PC-9 (cell line): ENCODE measurements at regions of chr16 and their contacts with region 1.

Region 1: DNA sequence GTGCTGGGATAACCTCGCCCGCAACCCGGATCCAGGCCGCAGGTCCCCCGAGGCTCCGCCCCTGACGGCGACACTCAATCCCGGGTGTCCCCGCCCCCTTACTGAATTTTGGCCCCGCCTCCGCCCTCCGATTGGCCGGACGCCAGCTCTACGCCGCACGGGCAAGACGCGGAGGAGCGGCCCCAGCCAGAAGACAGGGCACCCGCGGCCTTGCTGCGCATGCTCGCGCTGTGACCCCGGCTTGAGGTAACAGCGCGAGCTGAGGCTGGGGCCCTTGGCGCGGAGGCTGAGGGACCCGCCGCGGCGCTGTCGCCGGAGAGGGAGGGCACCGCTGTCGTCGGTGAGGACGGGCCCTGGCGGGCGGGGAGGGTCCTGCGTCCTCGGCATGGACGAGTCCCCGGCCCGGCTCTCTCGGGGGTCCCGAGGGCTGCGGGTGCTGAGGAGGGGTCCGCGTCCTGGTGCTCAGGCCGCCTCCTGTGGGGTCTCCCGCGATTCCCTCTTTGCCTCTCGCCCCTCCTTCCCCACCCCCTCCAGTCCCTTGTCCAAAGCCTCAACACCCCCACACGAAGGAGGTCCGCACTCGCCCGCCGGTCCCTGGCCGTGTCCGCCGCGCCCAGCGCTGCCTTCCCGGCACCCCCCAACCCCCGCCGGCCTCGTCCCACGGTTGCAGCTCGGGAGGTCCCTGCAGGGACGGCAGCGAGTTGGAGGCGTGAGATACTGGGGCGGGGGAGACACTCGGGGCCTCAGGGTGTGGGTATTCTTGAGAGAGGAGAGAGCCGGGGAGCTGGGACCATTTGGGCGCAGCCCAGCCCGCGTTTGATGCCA is at the start of gene FLYWCH2:
- DNase-seq: peak; percentile 88 to 100
- H3K4me3 ChIP-seq: peak within 1 kb of the TSS; percentile 95
- H3K27ac ChIP-seq: no peak within 1 kb of the TSS
- H3K4me1 ChIP-seq: peaks cover 5% of the 10 kb centered on the region; the same call in 1 of the 2 replicates
- H3K27me3 ChIP-seq: no peaks in the 10 kb centered on the region
- CTCF ChIP-seq: no peak
- total RNA-seq, gene FLYWCH2: 41.5 and 50.1 TPM in 2 replicates

Region 2: DNA sequence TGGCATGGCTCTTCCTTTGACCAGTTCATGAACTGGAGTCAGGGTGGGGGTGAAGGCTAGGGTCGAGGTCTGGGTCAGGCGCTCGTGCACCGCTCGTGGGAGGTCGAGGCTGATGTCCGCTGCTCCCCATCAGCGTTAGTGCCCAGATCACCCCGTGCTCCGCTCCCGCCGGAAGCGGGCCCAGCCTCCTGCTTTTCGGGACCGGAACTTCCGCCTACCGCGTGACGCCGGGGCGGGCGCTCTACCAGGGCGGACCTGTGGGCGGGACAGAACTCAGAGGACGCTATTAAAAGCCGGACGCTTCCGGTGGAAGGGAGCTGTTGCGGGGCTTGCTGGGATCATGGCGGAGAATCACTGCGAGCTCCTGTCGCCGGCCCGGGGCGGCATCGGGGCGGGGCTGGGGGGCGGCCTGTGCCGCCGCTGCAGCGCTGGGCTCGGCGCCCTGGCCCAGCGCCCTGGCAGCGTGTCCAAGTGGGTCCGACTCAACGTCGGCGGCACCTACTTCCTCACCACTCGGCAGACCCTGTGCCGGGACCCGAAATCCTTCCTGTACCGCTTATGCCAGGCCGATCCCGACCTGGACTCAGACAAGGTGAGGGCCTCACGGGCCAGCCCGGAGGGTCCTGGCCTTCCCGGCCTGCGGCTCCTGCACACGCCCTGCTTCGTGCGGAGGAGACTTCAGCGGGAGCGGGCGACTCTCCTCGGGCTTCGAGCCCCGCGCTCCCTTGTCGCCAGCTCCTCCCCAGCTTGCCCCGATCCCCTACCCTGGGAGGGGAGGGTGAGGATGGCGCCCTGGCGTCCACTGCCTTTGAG is 200.8 kb before region 1 on chr16 and contains the start of gene KCTD5:
- CTCF ChIA-PET with region 1: no interaction called
- POLR2A ChIA-PET with region 1: interaction called, 12 read pairs
- intact Hi-C with region 1: no loop called
- DNase-seq: peak; percentile 95 to 100
- H3K4me3 ChIP-seq: peak within 1 kb of the TSS; percentile 81
- H3K27ac ChIP-seq: peak within 1 kb of the TSS; percentile 72
- H3K4me1 ChIP-seq: peaks cover 33% of the 10 kb centered on the region
- H3K27me3 ChIP-seq: no peaks in the 10 kb centered on the region
- CTCF ChIP-seq: no peak
- total RNA-seq, gene KCTD5: 60.4 and 66.5 TPM in 2 replicates

Region 3: GRCh38 chr16:2905431-2906387 is 22.5 kb after region 1 on chr16:
- CTCF ChIA-PET with region 1: interaction called, 4 read pairs
- POLR2A ChIA-PET with region 1: interaction called, 16 read pairs
- intact Hi-C with region 1: loop called (anchors 1 kb)
- DNase-seq: peak; percentile 95 to 100
- H3K4me3 ChIP-seq: peak overlapping the region; percentile 86; the same call in 1 of the 2 replicates
- H3K27ac ChIP-seq: no peak overlapping the region
- H3K4me1 ChIP-seq: peaks cover 24% of the 10 kb centered on the region
- H3K27me3 ChIP-seq: no peaks in the 10 kb centered on the region
- CTCF ChIP-seq: no peak

Region 4: DNA sequence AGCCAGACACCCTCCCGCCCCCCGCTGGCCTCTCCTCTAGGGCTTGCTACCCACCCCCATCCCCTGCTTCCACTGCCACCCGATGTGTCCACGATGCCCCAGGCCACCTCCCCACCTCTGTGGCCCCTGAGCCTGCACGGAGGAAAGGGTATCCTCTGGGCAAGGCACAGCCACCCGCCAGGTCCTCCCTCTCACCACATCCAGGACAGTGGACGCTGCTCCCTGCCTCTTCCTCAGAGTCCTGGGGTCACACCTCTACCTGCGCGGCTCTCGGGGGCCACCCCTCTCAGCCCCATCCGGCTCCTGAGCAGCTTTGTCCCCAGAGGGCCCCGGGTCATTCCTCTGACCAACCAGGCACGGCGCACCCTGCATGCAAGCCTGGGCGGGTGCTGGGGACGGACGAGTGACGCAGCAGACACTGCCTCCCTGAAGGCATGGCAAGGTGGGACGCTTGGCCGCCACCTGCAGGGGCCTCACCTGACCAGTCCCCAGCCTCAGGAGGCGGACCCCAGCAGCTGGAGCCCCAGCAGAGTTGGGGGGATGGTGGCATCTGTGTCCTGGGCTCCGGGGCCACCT is 53.3 kb after region 1 on chr16:
- CTCF ChIA-PET with region 1: interaction called, 12 read pairs
- POLR2A ChIA-PET with region 1: interaction called, 23 read pairs
- intact Hi-C with region 1: no loop called
- DNase-seq: no peak
- H3K4me3 ChIP-seq: no peak overlapping the region
- H3K27ac ChIP-seq: no peak overlapping the region
- H3K4me1 ChIP-seq: no peaks in the 10 kb centered on the region
- H3K27me3 ChIP-seq: no peaks in the 10 kb centered on the region
- CTCF ChIP-seq: no peak

Region 5: GRCh38 chr16:2990891-2991290 is 107.7 kb after region 1 on chr16:
- CTCF ChIA-PET with region 1: no interaction called
- POLR2A ChIA-PET with region 1: no interaction called
- intact Hi-C with region 1: no loop called
- DNase-seq: peak in 1 of 2 experiments; percentile 87
- H3K4me3 ChIP-seq: no peak overlapping the region
- H3K27ac ChIP-seq: no peak overlapping the region
- H3K4me1 ChIP-seq: peaks cover 23% of the 10 kb centered on the region; the same call in 1 of the 2 replicates
- H3K27me3 ChIP-seq: no peaks in the 10 kb centered on the region
- CTCF ChIP-seq: no peak

Region 6: GRCh38 chr16:3045357-3045728 is 162.1 kb after region 1 on chr16:
- CTCF ChIA-PET with region 1: no interaction called
- POLR2A ChIA-PET with region 1: interaction called, 13 read pairs
- intact Hi-C with region 1: no loop called
- DNase-seq: no peak
- H3K4me3 ChIP-seq: peak overlapping the region; percentile 92; the same call in 1 of the 2 replicates
- H3K27ac ChIP-seq: no peak overlapping the region
- H3K4me1 ChIP-seq: peaks cover 8% of the 10 kb centered on the region; the same call in 1 of the 2 replicates
- H3K27me3 ChIP-seq: no peaks in the 10 kb centered on the region
- CTCF ChIP-seq: no peak